ENCODE measurements at regions of chr6 and their contacts with region 1.

Region 1: DNA sequence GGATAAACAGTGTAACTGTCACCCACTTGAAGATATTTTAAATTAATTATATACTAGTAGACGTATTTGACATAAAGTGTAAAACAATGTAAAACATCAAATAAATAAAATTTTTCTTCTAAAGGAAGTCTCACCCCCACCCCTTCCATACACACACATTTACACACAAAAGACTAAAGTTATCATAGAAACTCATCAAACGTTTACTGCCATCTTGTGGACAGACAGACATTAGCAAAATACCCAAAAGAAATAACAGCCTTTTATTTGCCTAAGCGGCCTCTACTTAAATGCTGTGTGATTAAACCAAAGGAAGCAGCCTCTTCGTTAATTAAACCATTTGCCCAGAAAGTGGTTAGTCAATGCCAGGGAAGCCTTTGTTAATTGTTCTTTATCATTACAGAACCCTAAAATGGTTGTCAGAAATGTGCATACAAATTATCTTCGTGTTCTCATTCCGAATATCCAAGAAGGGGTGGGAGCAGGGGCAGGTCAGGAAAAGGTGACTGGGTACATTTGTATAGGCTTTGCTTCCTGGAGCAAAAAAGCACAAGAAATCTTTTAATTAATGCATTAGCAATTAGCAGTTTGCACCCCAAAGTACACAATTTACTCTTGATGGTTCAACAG is 176.2 kb upstream of the SASH1 start:
- DNase-seq: no peak
- H3K4me3 ChIP-seq: no peak overlapping the region
- H3K27ac ChIP-seq: no peak overlapping the region
- H3K4me1 ChIP-seq: no peaks in the 10 kb centered on the region
- H3K27me3 ChIP-seq: peaks cover 0 to 16% (median 0%) of the 10 kb centered on the region in 7 donors
- CTCF ChIP-seq: peak in 9 of 11 experiments; percentile 22 to 71 (median 57)
- POLR2A ChIP-seq: no peak

Region 2: GRCh38 chr6:147506704-147507114 is 659.7 kb before region 1 on chr6:
- intact Hi-C with region 1: loop called (anchors 5 kb)
- DNase-seq: peak; percentile 77
- H3K4me3 ChIP-seq: peak overlapping the region in 6 of 8 donors; percentile 50 to 75 (median 54)
- H3K27ac ChIP-seq: no peak overlapping the region
- H3K4me1 ChIP-seq: peaks cover 11 to 39% (median 33%) of the 10 kb centered on the region in 6 donors
- H3K27me3 ChIP-seq: peaks cover 0 to 90% (median 22%) of the 10 kb centered on the region in 7 donors
- CTCF ChIP-seq: peak in 9 of 11 experiments; percentile 13 to 71 (median 65)
- POLR2A ChIP-seq: no peak

Region 3: GRCh38 chr6:147974376-147974775 is 192.1 kb before region 1 on chr6:
- intact Hi-C with region 1: no loop called
- DNase-seq: no peak
- H3K4me3 ChIP-seq: no peak overlapping the region
- H3K27ac ChIP-seq: no peak overlapping the region
- H3K4me1 ChIP-seq: peaks cover 0 to 3% (median 0%) of the 10 kb centered on the region in 6 donors
- H3K27me3 ChIP-seq: no peaks in the 10 kb centered on the region
- CTCF ChIP-seq: no peak
- POLR2A ChIP-seq: no peak